ENCODE measurements at regions of chr3 and their contacts with region 1.

Region 1: GRCh38 chr3:107284612-107285011 is 92.6 kb upstream of the CCDC54 start:
- DNase-seq: no peak
- ATAC-seq: peak in 1 of 8 donors; percentile 65
- H3K4me3 ChIP-seq: no peak overlapping the region
- H3K27ac ChIP-seq: no peak overlapping the region
- H3K4me1 ChIP-seq: peaks cover 0 to 15% (median 4%) of the 10 kb centered on the region in 9 donors
- H3K27me3 ChIP-seq: no peaks in the 10 kb centered on the region
- CTCF ChIP-seq: no peak

Region 2: GRCh38 chr3:107206141-107206540 is 78.5 kb before region 1 on chr3:
- intact Hi-C with region 1: loop called in 1 of 10 experiments (anchors 10 kb)
- DNase-seq: peak in 1 of 2 donors; percentile 40
- ATAC-seq: no peak
- H3K4me3 ChIP-seq: no peak overlapping the region
- H3K27ac ChIP-seq: peak overlapping the region in 4 of 10 donors; percentile 69 to 82 (median 79)
- H3K4me1 ChIP-seq: peaks cover 11 to 52% (median 41%) of the 10 kb centered on the region in 9 donors
- H3K27me3 ChIP-seq: no peaks in the 10 kb centered on the region
- CTCF ChIP-seq: peak; percentile 10 to 73 (median 57)

Region 3: DNA sequence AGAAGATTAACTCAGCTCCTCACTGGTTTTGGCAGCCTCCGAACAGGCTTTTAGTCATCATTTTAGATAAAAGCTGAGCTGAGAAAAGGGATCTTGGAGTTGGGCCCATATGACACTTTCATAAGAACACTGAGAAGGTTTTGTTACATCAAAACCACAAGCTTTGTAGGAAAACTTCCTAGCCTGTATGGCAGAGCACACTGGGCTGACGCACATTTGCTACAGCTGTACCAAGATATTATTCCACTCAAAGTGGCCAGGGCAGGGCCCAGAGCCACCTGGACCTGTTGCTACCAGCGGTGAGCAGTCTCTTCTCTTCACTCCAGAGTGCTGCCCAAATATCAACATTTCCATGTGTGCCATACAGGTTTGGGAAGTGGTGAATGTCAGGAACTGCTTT is 67.9 kb before region 1 on chr3:
- intact Hi-C with region 1: no loop called
- DNase-seq: peak; percentile 24 to 39
- ATAC-seq: peak in 7 of 8 donors; percentile 46 to 91 (median 79)
- H3K4me3 ChIP-seq: no peak overlapping the region
- H3K27ac ChIP-seq: peak overlapping the region in 3 of 10 donors; percentile 18 to 45 (median 37)
- H3K4me1 ChIP-seq: peaks cover 0 to 36% (median 15%) of the 10 kb centered on the region in 9 donors
- H3K27me3 ChIP-seq: no peaks in the 10 kb centered on the region
- CTCF ChIP-seq: no peak

Region 4: DNA sequence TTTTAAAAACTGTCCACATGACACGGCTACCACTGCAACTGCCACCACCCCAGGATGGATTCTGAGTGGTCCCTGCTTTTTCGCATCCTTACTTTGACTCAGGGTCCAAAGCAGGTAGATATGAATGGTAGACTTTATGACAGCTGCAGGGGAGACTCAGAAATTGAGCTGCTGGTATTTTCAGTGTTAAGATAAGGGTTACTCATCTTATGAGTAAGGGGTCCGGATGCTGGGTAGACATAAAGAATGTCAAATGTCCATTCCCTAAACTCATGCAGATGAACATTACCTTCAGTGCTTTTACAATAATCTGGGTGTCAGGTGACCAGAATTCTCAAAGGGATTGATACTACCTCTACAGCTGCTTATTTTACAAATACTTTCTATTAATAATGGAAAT is 212.2 kb after region 1 on chr3:
- intact Hi-C with region 1: no loop called
- DNase-seq: no peak
- ATAC-seq: no peak
- H3K4me3 ChIP-seq: no peak overlapping the region
- H3K27ac ChIP-seq: no peak overlapping the region
- H3K4me1 ChIP-seq: no peaks in the 10 kb centered on the region
- H3K27me3 ChIP-seq: peaks cover 0 to 13% (median 0%) of the 10 kb centered on the region in 7 donors
- CTCF ChIP-seq: no peak